CD8-positive, alpha-beta memory T cell (primary cell): ENCODE measurements at regions of chr6 and their contacts with region 1.

Region 1: GRCh38 chr6:99868074-99868702 is 125.8 kb downstream of the MCHR2 start:
- DNase-seq: peak; percentile 42 to 69 (median 54)
- H3K4me3 ChIP-seq: no peak overlapping the region
- H3K4me3 Mint-ChIP-seq: peak overlapping the region in 3 of 7 donors; percentile 6 to 26 (median 10)
- H3K27ac ChIP-seq: no peak overlapping the region
- H3K27ac Mint-ChIP-seq: peak overlapping the region in 1 of 8 donors; percentile 4
- H3K4me1 ChIP-seq: peaks cover 6% of the 10 kb centered on the region
- H3K4me1 Mint-ChIP-seq: peaks cover 5 to 7% (median 6%) of the 10 kb centered on the region in 3 donors
- H3K27me3 ChIP-seq: no peaks in the 10 kb centered on the region
- H3K27me3 Mint-ChIP-seq: peaks cover 13 to 44% of the 10 kb centered on the region in 2 donors

Region 2: DNA sequence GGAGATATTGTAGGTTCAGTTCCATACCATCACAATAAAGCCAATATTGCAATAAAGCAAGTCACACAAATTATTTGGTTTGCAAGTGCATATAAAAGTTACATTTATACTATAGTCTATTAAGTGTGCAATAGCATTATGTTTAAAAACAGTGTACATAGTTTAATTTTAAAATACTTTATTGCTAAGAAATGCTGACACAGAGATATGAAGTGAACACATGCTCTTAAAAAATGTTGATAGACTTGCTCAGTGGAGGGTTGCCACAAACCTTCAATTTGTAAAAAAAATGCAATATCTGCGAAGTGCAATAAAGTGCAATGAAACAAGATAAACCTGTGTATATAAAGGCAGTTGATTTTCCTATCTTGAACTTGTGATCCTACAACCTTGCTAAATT is 100.0 kb before region 1 on chr6:
- CTCF ChIA-PET with region 1: no interaction called
- POLR2A ChIA-PET with region 1: no interaction called
- DNase-seq: no peak
- H3K4me3 ChIP-seq: no peak overlapping the region
- H3K4me3 Mint-ChIP-seq: no peak overlapping the region
- H3K27ac ChIP-seq: no peak overlapping the region
- H3K27ac Mint-ChIP-seq: no peak overlapping the region
- H3K4me1 ChIP-seq: no peaks in the 10 kb centered on the region
- H3K4me1 Mint-ChIP-seq: no peaks in the 10 kb centered on the region
- H3K27me3 ChIP-seq: no peaks in the 10 kb centered on the region
- H3K27me3 Mint-ChIP-seq: peaks cover 7 to 9% of the 10 kb centered on the region in 2 donors

Region 3: GRCh38 chr6:99879431-99879830 is 11.2 kb after region 1 on chr6:
- CTCF ChIA-PET with region 1: interaction called, 16 read pairs
- POLR2A ChIA-PET with region 1: no interaction called
- DNase-seq: no peak
- H3K4me3 ChIP-seq: no peak overlapping the region
- H3K4me3 Mint-ChIP-seq: no peak overlapping the region
- H3K27ac ChIP-seq: no peak overlapping the region
- H3K27ac Mint-ChIP-seq: peak overlapping the region in 1 of 8 donors; percentile 49
- H3K4me1 ChIP-seq: no peaks in the 10 kb centered on the region
- H3K4me1 Mint-ChIP-seq: peaks cover 6 to 10% (median 8%) of the 10 kb centered on the region in 3 donors
- H3K27me3 ChIP-seq: no peaks in the 10 kb centered on the region
- H3K27me3 Mint-ChIP-seq: peaks cover 7 to 12% of the 10 kb centered on the region in 2 donors